Right cardiac atrium (tissue), 5 donors: ENCODE measurements at regions of chr1 and their contacts with region 1.

Region 1: GRCh38 chr1:246907472-246907871 is 24.3 kb downstream of the AHCTF1 start:
- DNase-seq: no peak
- ATAC-seq: peak; percentile 55 to 69
- H3K4me3 ChIP-seq: no peak overlapping the region
- H3K27ac ChIP-seq: no peak overlapping the region
- H3K4me1 ChIP-seq: no peaks in the 10 kb centered on the region
- H3K27me3 ChIP-seq: no peaks in the 10 kb centered on the region

Region 2: GRCh38 chr1:246959944-246960693 is 52.6 kb after region 1 on chr1:
- intact Hi-C with region 1: loop called in 1 of 4 experiments (anchors 10 kb)
- DNase-seq: no peak
- ATAC-seq: peak; percentile 45 to 59
- H3K4me3 ChIP-seq: no peak overlapping the region
- H3K27ac ChIP-seq: no peak overlapping the region
- H3K4me1 ChIP-seq: no peaks in the 10 kb centered on the region
- H3K27me3 ChIP-seq: no peaks in the 10 kb centered on the region

Region 3: DNA sequence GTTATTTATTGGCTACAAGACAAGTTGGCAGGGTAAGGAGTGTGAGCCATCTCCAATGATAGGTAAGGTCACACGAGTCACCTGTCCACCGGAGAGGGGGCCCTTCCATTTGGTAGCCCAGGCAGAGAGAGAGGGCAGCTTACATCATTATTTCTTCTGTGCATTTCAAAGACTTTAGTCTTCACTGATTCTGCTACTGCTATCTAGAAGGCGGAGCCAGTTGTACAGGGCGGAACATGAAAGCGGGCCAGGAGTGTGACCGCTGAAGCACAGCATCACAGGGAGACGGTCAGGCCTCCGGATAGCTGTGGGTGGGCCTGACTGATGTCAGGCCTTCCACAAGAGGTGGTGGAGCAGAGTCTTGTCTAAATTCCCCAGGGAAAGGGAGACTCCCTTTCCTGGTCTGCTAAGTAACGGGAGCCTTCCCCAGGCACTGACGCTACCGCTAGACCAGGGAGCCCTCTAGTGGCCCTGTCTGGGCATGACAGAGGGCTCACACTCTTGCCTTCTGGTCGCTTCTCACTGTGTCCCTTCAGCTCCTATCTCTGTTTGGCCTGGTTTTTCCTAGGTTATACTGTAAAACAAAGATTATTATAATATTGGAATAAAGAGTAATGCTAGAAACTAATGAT is 63.7 kb after region 1 on chr1:
- intact Hi-C with region 1: loop called in 2 of 4 experiments (anchors 5 to 10 kb)
- DNase-seq: peak; percentile 53 to 82 (median 71)
- ATAC-seq: peak in 1 of 2 donors; percentile 50
- H3K4me3 ChIP-seq: no peak overlapping the region
- H3K27ac ChIP-seq: no peak overlapping the region
- H3K4me1 ChIP-seq: no peaks in the 10 kb centered on the region
- H3K27me3 ChIP-seq: no peaks in the 10 kb centered on the region